WTC11 (cell line): ENCODE measurements at regions of chr17 and their contacts with region 1.

Region 1: GRCh38 chr17:41959336-41960095 is 7.1 kb upstream of the CNP start:
- DNase-seq: peak; percentile 61
- ATAC-seq: peak; percentile 84
- H3K4me3 Mint-ChIP-seq: no peak overlapping the region
- H3K27ac Mint-ChIP-seq: peak overlapping the region; percentile 73
- H3K4me1 Mint-ChIP-seq: peaks cover 30% of the 10 kb centered on the region
- H3K27me3 Mint-ChIP-seq: peaks cover 2% of the 10 kb centered on the region; the same call in 1 of the 2 replicates
- CTCF ChIP-seq: no peak

Region 2: DNA sequence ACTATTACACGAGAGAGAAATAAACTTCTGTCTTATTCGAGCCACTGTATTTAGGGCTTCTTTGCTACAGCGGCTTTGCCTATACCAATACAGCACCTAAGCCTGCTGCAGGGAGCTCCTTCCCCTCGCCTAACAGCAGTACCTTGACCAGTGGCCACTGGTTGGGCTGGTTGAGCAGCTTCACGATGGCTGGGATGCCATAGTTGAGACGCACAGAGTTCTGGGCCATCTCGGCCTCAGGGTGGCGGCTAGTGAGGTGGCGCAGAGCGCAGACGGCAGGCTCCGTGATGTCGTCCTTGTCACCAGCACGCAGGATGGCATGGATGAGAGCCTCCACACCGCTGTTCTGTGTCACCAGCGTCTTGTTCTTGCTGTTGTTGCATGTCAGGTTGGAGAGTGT is 196.7 kb before region 1 on chr17:
- CTCF ChIA-PET with region 1: no interaction called
- POLR2A ChIA-PET with region 1: no interaction called
- DNase-seq: no peak
- ATAC-seq: no peak
- H3K4me3 Mint-ChIP-seq: no peak overlapping the region
- H3K27ac Mint-ChIP-seq: no peak overlapping the region
- H3K4me1 Mint-ChIP-seq: no peaks in the 10 kb centered on the region
- H3K27me3 Mint-ChIP-seq: no peaks in the 10 kb centered on the region
- CTCF ChIP-seq: no peak

Region 3: GRCh38 chr17:41801374-41802271 is 157.9 kb before region 1 on chr17:
- CTCF ChIA-PET with region 1: interaction called, 10 read pairs
- POLR2A ChIA-PET with region 1: no interaction called
- DNase-seq: peak; percentile 94
- ATAC-seq: peak; percentile 54
- H3K4me3 Mint-ChIP-seq: peak overlapping the region; percentile 66
- H3K27ac Mint-ChIP-seq: peak overlapping the region; percentile 97
- H3K4me1 Mint-ChIP-seq: peaks cover 26% of the 10 kb centered on the region
- H3K27me3 Mint-ChIP-seq: no peaks in the 10 kb centered on the region
- CTCF ChIP-seq: peak; percentile 97

Region 4: DNA sequence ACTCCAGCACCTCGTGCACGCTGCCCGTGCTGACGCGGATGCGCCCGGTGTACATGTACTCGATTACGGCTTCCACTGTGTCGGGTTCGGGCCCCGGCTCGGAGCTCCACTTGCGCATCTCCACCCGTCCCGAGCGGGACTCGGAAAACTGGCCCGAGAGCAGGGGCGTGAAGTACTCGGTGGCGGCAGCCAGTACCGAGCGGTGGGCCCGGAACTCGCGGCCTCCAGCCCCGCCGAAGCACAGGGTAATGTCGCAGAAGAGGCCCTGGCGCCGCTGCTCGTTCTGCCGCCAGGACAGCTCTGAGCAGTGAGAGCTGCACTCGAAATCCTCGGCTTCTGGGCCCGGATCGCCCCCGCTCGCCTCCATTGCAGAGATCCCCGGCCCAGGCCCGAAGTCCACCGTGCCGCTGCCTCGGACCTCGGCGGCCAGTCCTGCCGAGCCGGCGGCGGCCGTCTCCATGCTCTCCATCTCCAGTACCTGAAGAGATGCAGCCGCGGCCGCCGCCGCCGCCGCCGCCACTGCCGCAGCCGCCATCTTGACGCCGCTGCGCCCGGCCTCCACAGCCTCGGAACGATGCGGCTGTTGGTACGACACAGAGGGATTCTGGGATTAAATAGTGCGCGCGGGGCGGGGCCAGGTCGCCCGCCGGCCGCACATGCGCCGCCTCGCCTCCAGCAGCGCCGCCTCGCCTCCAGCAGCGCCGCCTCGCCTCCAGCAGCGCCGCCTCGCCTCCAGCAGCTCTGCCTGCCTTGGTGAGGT is 94.5 kb before region 1 on chr17 and contains the start of gene KLHL11:
- CTCF ChIA-PET with region 1: interaction called, 11 read pairs
- POLR2A ChIA-PET with region 1: no interaction called
- DNase-seq: peak; percentile 91
- ATAC-seq: peak; percentile 88
- H3K4me3 Mint-ChIP-seq: no peak within 1 kb of the TSS; the same call in 1 of the 2 replicates
- H3K27ac Mint-ChIP-seq: peak within 1 kb of the TSS; percentile 97
- H3K4me1 Mint-ChIP-seq: peaks cover 23% of the 10 kb centered on the region
- H3K27me3 Mint-ChIP-seq: no peaks in the 10 kb centered on the region
- CTCF ChIP-seq: no peak
- total RNA-seq, gene KLHL11: 13.4 to 15.0 TPM (median 14.7 TPM) in 3 replicates

Region 5: GRCh38 chr17:41918314-41919164 is 41.0 kb before region 1 on chr17 and contains the start of gene ACLY:
- CTCF ChIA-PET with region 1: interaction called, 134 read pairs
- POLR2A ChIA-PET with region 1: interaction called, 14 read pairs
- DNase-seq: peak; percentile 99
- ATAC-seq: peak; percentile 89
- H3K4me3 Mint-ChIP-seq: peak within 1 kb of the TSS; percentile 84
- H3K27ac Mint-ChIP-seq: peak within 1 kb of the TSS; percentile 96
- H3K4me1 Mint-ChIP-seq: peaks cover 51% of the 10 kb centered on the region
- H3K27me3 Mint-ChIP-seq: no peaks in the 10 kb centered on the region
- CTCF ChIP-seq: no peak
- total RNA-seq, gene ACLY: 312 to 350 TPM (median 316 TPM) in 3 replicates

Region 6: DNA sequence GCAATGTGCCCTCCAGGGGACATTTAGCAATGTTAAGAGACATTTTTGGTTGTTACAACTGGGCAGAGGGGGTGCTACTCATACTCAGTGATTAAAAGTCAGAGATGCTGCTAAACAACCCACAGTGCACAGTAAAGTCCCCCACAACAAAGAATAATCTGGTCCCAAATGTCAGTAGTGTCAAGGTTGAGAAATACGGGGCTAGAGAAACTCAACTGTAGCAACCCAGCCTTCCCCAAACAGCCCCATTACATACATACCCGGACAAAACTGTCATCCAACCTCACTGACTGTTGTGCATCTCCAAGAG is 37.3 kb after region 1 on chr17:
- CTCF ChIA-PET with region 1: no interaction called
- POLR2A ChIA-PET with region 1: no interaction called
- DNase-seq: no peak
- ATAC-seq: no peak
- H3K4me3 Mint-ChIP-seq: no peak overlapping the region
- H3K27ac Mint-ChIP-seq: no peak overlapping the region
- H3K4me1 Mint-ChIP-seq: no peaks in the 10 kb centered on the region
- H3K27me3 Mint-ChIP-seq: no peaks in the 10 kb centered on the region; the same call in 1 of the 2 replicates
- CTCF ChIP-seq: no peak

Region 7: GRCh38 chr17:42019509-42020404 is 60.2 kb after region 1 on chr17 and contains the start of gene NKIRAS2:
- CTCF ChIA-PET with region 1: interaction called, 25 read pairs
- POLR2A ChIA-PET with region 1: interaction called, 10 read pairs
- DNase-seq: peak; percentile 97
- ATAC-seq: peak; percentile 72
- H3K4me3 Mint-ChIP-seq: peak within 1 kb of the TSS; percentile 95
- H3K27ac Mint-ChIP-seq: peak within 1 kb of the TSS; percentile 89
- H3K4me1 Mint-ChIP-seq: peaks cover 40% of the 10 kb centered on the region
- H3K27me3 Mint-ChIP-seq: no peaks in the 10 kb centered on the region
- CTCF ChIP-seq: peak; percentile 80
- total RNA-seq, gene NKIRAS2: 31.9 to 37.3 TPM (median 36.1 TPM) in 3 replicates